ENCODE measurements at regions of chr16 and their contacts with region 1.

Region 1: GRCh38 chr16:23088018-23088417 is 61.2 kb downstream of the USP31 start:
- DNase-seq: peak in 1 of 2 donors; percentile 38
- ATAC-seq: peak; percentile 72 to 95 (median 91)
- H3K4me3 ChIP-seq: no peak overlapping the region
- H3K27ac ChIP-seq: peak overlapping the region in 7 of 10 donors; percentile 18 to 70 (median 49)
- H3K4me1 ChIP-seq: peaks cover 0 to 32% (median 6%) of the 10 kb centered on the region in 9 donors
- H3K27me3 ChIP-seq: no peaks in the 10 kb centered on the region
- CTCF ChIP-seq: no peak

Region 2: DNA sequence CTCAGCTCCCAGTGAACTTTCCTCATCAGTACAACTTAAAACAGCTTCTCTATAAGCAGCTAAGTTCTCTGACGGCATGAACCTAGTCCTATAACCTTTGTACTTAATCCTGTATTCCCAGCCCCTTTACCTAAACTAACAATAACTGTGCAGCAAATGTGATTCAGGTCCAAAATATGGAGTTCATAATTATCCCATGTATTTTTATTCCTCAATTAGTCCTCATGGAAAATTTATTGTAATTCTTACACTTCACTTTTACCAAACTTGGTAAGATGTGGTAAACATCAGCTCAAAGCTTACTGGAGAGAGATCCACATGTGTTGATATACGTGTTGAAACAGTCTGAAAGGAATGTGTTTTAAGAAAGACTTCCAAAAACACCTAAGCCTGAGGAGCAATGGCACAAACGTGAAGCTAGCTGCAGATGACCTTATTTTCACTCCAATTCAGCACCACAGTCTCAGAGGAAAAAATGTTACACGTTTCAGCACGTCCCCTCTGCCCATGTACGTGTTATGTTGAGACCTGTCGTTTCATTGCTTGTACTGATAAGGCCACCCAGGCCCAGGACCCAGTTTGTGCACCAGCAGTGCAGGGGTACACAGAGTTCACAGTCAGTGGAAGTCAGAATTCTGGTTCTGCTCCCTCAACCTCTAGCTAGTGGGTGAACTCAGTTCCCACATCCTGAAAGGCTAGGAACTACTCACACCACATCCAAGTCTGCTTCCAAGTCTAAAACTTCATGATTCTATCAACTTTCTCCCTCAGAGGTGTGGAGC is 54.1 kb after region 1 on chr16:
- intact Hi-C with region 1: loop called in 2 of 10 experiments (anchors 5 to 10 kb)
- DNase-seq: no peak
- ATAC-seq: peak in 7 of 8 donors; percentile 21 to 91 (median 61)
- H3K4me3 ChIP-seq: no peak overlapping the region
- H3K27ac ChIP-seq: peak overlapping the region in 9 of 10 donors; percentile 22 to 61 (median 36)
- H3K4me1 ChIP-seq: peaks cover 3 to 82% (median 52%) of the 10 kb centered on the region in 9 donors
- H3K27me3 ChIP-seq: no peaks in the 10 kb centered on the region
- CTCF ChIP-seq: no peak

Region 3: GRCh38 chr16:23155439-23156049 is 67.5 kb after region 1 on chr16:
- intact Hi-C with region 1: no loop called
- DNase-seq: no peak
- ATAC-seq: peak in 3 of 8 donors; percentile 49 to 70 (median 59)
- H3K4me3 ChIP-seq: no peak overlapping the region
- H3K27ac ChIP-seq: no peak overlapping the region
- H3K4me1 ChIP-seq: no peaks in the 10 kb centered on the region
- H3K27me3 ChIP-seq: peaks cover 0 to 15% (median 0%) of the 10 kb centered on the region in 7 donors
- CTCF ChIP-seq: peak in 6 of 9 donors; percentile 26 to 52 (median 43)

Measured in heart right ventricle (tissue), 16 donors.